ENCODE measurements at regions of chr1 and their contacts with region 1.

Region 1: DNA sequence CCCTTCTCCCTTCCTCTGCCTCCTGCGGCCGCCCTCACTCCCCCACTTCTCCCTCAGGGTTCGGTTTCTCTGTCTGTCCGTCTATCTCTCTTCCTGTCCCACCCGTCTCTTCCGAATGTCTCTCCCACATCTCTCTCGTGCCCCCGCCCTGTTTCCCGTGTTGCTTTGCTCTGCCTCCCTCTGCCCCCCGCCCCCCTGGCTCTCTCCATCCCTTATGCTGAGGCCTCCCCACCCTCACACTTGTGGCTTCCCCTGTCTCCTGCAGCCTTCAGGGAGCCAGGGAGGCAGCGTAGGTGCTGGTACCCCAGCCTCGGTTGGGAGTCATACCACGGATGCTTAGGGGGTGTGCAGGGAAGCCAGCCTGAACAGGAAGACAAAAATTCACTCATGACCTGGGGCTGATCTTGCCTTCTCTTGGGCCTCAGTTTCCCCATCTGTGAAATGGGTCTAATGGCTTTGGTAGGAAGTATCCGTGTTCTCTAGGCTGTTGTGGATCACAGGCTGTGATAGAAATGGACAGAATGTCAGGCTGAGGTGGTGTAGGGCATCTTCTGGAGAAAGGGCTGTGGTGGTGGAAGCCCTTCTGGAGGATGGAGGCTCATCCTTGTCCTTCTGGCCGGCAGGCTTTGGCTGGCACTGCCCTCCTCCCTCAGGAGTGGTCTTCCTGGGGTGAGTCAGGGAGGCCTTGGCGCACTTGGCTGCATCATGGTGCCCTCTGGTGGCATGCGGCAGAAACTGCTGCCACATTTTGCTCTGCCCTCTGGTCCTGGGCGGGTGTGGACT is 55.5 kb downstream of the FOXO6 start:
- DNase-seq: peak in 2 of 3 donors; percentile 69 to 78
- ATAC-seq: peak; percentile 73
- H3K4me3 ChIP-seq: no peak overlapping the region
- H3K4me1 ChIP-seq: peaks cover 3% of the 10 kb centered on the region
- CTCF ChIP-seq: peak; percentile 88

Region 2: DNA sequence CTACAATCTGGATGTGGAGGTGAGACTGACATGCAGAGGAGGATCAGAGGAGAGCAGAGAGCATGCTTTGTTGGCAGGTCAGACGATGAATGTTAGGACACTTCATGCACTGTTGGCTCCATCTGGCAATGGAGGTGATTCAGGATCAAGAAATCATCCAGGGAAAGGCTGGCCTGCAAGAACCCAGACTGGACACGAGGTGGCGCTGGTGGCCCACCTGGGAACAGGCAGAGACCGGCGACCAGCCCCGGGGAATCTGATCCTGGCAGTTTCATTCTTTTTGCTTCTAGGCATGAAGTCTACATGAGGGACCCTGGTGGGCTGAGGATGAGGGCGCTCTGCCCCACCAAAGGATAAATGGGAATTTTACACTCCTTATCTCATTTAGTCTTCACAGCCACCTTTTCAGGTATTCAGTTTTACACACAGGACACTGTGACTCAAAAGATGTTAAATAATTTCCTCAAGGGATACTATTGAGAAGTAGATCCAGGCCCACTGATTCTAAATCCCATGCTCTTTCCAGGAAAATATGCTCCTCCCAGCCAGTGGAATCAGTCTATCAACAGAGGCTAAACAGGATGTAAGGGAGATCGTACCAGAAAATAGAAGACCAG is 148.5 kb before region 1 on chr1:
- intact Hi-C with region 1: loop called (anchors 5 to 10 kb)
- DNase-seq: peak; percentile 69 to 81 (median 79)
- ATAC-seq: peak; percentile 93
- H3K4me3 ChIP-seq: no peak overlapping the region
- H3K4me1 ChIP-seq: no peaks in the 10 kb centered on the region
- CTCF ChIP-seq: peak; percentile 95

Region 3: DNA sequence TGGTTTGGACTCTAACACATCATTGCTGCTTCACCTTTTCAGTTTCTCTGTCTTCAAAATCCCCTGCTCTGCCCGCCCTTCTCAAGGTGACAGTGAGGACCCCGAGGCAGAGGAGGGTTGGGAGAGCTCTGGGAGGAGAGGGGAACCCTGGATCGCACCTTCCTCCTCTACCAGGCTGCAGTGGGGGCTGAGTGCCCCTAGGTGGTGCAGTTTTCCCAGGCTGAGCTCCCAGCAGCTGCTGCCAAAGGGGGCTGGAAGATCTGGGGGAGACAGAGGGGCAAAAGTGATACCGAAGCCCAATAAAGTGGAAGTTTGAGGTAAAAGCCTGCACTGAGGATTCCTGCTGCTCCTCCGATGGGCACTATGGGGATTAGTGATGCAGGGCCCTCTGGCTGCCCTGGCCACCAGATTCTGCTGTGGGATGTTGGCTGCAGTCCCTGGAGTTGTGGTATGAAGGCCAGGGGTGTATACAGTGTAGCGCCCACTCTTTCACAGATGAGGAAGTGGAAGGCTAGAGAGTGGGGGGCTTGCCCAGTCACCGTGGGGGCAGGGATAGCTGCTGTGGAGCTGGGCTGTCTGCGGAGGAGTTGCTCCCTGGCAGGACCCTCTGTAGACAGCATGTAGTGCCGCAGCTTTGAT is 133.9 kb before region 1 on chr1:
- intact Hi-C with region 1: loop called in 1 of 2 experiments (anchors 5 kb)
- DNase-seq: peak in 2 of 3 donors; percentile 36 to 44
- ATAC-seq: peak; percentile 66
- H3K4me3 ChIP-seq: no peak overlapping the region
- H3K4me1 ChIP-seq: no peaks in the 10 kb centered on the region
- CTCF ChIP-seq: peak; percentile 53

Region 4: GRCh38 chr1:41360993-41361753 is 55.6 kb before region 1 on chr1 and contains the start of gene FOXO6:
- intact Hi-C with region 1: no loop called
- DNase-seq: peak; percentile 98 to 100 (median 99)
- ATAC-seq: peak; percentile 90
- H3K4me3 ChIP-seq: no peak within 1 kb of the TSS
- H3K4me1 ChIP-seq: peaks cover 42% of the 10 kb centered on the region
- CTCF ChIP-seq: peak; percentile 74
- total RNA-seq, gene FOXO6: 0.65 to 2.0 (median 0.72) TPM

Region 5: DNA sequence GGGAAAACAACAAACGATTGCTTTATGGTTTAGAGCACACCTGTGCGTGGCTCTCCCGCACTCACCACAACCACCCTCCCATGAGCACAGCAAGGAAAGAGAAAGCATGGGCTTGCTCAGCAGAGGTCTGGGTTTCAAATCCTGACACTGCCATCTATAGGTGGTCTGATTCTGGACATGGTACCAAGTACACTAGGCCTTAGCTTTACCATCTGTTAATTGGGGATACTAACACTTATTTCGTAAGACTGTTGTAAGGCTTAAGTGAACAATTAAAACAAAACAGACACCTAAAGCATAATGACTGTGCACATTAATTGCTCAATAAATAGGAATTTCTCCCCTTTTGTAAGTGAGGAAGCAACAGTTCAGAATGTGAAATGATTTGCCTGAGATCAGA is 451.9 kb after region 1 on chr1:
- intact Hi-C with region 1: no loop called
- DNase-seq: no peak
- ATAC-seq: peak; percentile 42
- H3K4me3 ChIP-seq: no peak overlapping the region
- H3K4me1 ChIP-seq: no peaks in the 10 kb centered on the region
- CTCF ChIP-seq: no peak